Lower leg skin (tissue), 4 donors: ENCODE measurements at regions of chr16 and their contacts with region 1.

Region 1: GRCh38 chr16:86519649-86520316 is 9.5 kb downstream of the FOXF1 start:
- DNase-seq: no peak
- H3K4me3 ChIP-seq: no peak overlapping the region
- CTCF ChIP-seq: peak in 1 of 3 donors; percentile 38
- POLR2A ChIP-seq: no peak

Region 2: GRCh38 chr16:86072328-86073102 is 447.3 kb before region 1 on chr16:
- intact Hi-C with region 1: loop called (anchors 5 kb)
- DNase-seq: peak in 1 of 2 donors; percentile 41
- H3K4me3 ChIP-seq: no peak overlapping the region
- CTCF ChIP-seq: no peak
- POLR2A ChIP-seq: no peak

Region 3: GRCh38 chr16:86343027-86343787 is 176.6 kb before region 1 on chr16:
- intact Hi-C with region 1: loop called (anchors 5 kb)
- DNase-seq: no peak
- H3K4me3 ChIP-seq: no peak overlapping the region
- CTCF ChIP-seq: no peak
- POLR2A ChIP-seq: no peak